Lower lobe of right lung (tissue), 2 donors: ENCODE measurements at regions of chr3 and their contacts with region 1.

Region 1: GRCh38 chr3:115692887-115693524 is 69.7 kb downstream of the GAP43 start:
- DNase-seq: peak; percentile 60
- ATAC-seq: peak; percentile 95
- H3K4me3 ChIP-seq: no peak overlapping the region
- H3K27ac ChIP-seq: no peak overlapping the region
- H3K4me1 ChIP-seq: no peaks in the 10 kb centered on the region
- H3K27me3 ChIP-seq: no peaks in the 10 kb centered on the region
- CTCF ChIP-seq: peak; percentile 80

Region 2: DNA sequence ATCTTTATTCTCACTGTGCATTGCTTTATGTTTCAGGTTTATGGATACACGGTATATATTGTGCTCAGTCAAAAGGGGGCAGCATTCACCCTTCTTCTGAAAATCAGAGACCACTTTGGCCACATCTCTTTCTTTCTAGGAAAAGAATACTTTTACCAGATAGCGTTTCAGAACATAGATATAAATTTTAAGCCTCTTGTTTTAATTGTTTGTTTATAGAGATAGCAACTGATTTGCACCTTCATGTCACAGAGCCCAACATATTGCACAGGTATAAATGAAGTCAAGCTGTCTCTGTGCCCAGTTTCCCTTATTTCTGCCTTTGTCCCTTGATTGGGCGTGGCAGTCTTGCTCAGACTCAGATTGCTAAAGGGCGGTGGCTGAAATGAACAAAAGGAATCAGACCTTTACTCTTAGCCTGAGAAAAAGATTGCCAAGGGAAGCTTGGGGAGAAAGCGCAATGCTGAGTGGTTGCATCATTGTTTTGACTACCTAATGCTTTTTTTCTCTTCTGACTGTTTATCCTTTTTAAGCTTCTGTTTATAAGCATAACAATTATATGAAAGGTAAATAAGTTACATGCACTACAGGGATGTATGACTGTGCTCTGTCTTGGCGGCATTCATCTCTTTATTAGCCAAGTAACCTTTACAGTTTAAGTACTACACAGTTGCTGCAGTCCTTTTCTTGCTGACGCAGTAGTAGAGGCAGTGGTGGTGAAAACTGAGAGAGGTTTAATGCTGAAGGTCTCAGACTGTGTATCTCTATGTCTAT is 475.1 kb before region 1 on chr3:
- intact Hi-C with region 1: loop called (anchors 10 kb)
- DNase-seq: no peak
- ATAC-seq: peak in 1 of 2 donors; percentile 52
- H3K4me3 ChIP-seq: no peak overlapping the region
- H3K27ac ChIP-seq: no peak overlapping the region
- H3K4me1 ChIP-seq: peaks cover 4% of the 10 kb centered on the region
- H3K27me3 ChIP-seq: no peaks in the 10 kb centered on the region
- CTCF ChIP-seq: peak; percentile 52